ENCODE measurements at regions of chr5 and their contacts with region 1.

Region 1: DNA sequence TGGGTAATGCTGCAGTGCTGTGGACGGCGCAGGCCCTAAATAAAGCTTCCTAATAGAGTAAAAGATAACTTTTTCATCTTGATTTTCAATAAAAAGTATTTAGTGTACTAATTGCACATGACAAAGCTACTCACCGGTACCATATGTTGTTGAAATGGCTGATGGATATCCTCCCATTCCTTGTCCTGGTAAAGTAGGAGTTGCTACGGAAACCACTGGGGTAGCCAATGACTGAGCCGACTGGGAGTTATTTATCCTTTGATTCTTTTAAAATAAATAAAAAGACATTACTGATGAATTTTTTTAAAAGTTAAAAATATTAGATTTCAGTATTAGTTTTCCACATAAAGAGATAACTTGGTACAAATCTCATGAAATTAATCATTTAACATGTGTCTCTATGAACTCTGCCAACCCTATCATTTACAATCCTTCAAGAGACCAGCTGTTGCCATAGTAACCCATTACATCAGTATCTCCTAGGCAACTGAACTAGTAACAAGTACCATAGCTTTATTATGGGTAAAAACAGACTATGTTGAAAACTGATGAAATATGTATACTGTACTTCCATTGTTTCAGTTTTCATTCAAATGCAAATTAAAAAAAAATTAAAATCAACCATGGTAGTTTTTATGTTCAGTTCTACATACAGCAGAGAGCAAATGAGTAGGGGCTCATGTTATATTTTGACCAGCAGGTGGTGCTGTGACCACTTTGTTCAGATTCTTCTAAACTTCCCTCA is 153.7 kb downstream of the MEF2C start:
- DNase-seq: peak; percentile 88
- ATAC-seq: peak; percentile 67
- H3K4me3 ChIP-seq: no peak overlapping the region
- H3K27ac ChIP-seq: no peak overlapping the region
- H3K4me1 ChIP-seq: 0 out of 2 replicates have a peak, but pooled peaks cover 3% of the 10 kb centered on the region
- H3K27me3 ChIP-seq: no peaks in the 10 kb centered on the region
- CTCF ChIP-seq: peak; percentile 84

Region 2: GRCh38 chr5:87421307-87421706 is 1307.9 kb before region 1 on chr5:
- CTCF ChIA-PET with region 1: no interaction called
- POLR2A ChIA-PET with region 1: no interaction called
- intact Hi-C with region 1: loop called (anchors 10 kb)
- DNase-seq: no peak
- ATAC-seq: no peak
- H3K4me3 ChIP-seq: no peak overlapping the region
- H3K27ac ChIP-seq: no peak overlapping the region
- H3K4me1 ChIP-seq: peaks cover 16% of the 10 kb centered on the region
- H3K27me3 ChIP-seq: no peaks in the 10 kb centered on the region
- CTCF ChIP-seq: no peak

Region 3: GRCh38 chr5:88875341-88876234 is 146.3 kb after region 1 on chr5:
- CTCF ChIA-PET with region 1: interaction called, 9 read pairs
- POLR2A ChIA-PET with region 1: no interaction called
- intact Hi-C with region 1: loop called (anchors 1 kb)
- DNase-seq: peak; percentile 49
- ATAC-seq: peak; percentile 56
- H3K4me3 ChIP-seq: peak overlapping the region; percentile 25; the same call in 1 of the 2 replicates
- H3K27ac ChIP-seq: 0 out of 2 replicates have a peak overlapping the region, but pooled peaks have one; percentile 9
- H3K4me1 ChIP-seq: peaks cover 54% of the 10 kb centered on the region
- H3K27me3 ChIP-seq: no peaks in the 10 kb centered on the region
- CTCF ChIP-seq: no peak

Region 4: GRCh38 chr5:89036704-89037489 is 307.6 kb after region 1 on chr5:
- CTCF ChIA-PET with region 1: no interaction called
- POLR2A ChIA-PET with region 1: no interaction called
- intact Hi-C with region 1: loop called (anchors 5 kb)
- DNase-seq: peak; percentile 97
- ATAC-seq: peak; percentile 73
- H3K4me3 ChIP-seq: peak overlapping the region; percentile 22; the same call in 1 of the 2 replicates
- H3K27ac ChIP-seq: peak overlapping the region; percentile 97
- H3K4me1 ChIP-seq: peaks cover 48% of the 10 kb centered on the region
- H3K27me3 ChIP-seq: no peaks in the 10 kb centered on the region
- CTCF ChIP-seq: no peak

Region 5: GRCh38 chr5:89457411-89458331 is 728.4 kb after region 1 on chr5:
- CTCF ChIA-PET with region 1: no interaction called
- POLR2A ChIA-PET with region 1: no interaction called
- intact Hi-C with region 1: loop called (anchors 5 kb)
- DNase-seq: peak; percentile 90
- ATAC-seq: peak; percentile 98
- H3K4me3 ChIP-seq: no peak overlapping the region
- H3K27ac ChIP-seq: peak overlapping the region; percentile 89
- H3K4me1 ChIP-seq: peaks cover 19% of the 10 kb centered on the region
- H3K27me3 ChIP-seq: no peaks in the 10 kb centered on the region
- CTCF ChIP-seq: no peak

Region 6: GRCh38 chr5:90184764-90185163 is 1455.5 kb after region 1 on chr5:
- CTCF ChIA-PET with region 1: no interaction called
- POLR2A ChIA-PET with region 1: no interaction called
- intact Hi-C with region 1: loop called (anchors 10 kb)
- DNase-seq: no peak
- ATAC-seq: no peak
- H3K4me3 ChIP-seq: no peak overlapping the region
- H3K27ac ChIP-seq: no peak overlapping the region
- H3K4me1 ChIP-seq: peaks cover 15% of the 10 kb centered on the region
- H3K27me3 ChIP-seq: no peaks in the 10 kb centered on the region
- CTCF ChIP-seq: no peak

Region 7: DNA sequence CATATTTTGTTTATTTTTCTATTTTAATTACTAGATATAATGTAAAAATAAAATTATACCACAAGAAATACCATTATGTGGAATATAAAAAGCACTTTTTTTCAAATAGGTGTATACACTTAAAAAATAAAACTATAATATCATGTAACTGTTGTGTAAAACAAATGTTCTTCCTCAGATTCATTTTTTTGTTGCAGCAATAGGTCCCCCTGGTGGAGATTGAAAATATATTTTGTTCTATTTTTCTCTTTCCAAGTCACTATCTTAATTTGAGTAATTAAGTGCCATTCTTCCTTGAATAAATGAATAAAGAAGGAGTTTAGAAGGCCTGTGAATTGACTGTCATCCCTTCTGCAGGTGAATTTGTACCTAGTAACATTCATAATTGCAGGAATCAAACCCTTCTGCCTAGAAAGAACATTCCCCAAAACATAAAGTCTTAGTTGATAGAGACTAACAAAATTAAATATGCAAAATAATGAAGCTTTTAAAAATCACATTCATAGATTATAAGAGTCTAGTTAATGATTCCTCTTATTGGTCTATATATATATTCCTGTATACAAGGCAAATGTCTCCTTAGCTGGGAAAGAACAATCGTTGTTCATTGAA is 1656.9 kb after region 1 on chr5:
- CTCF ChIA-PET with region 1: no interaction called
- POLR2A ChIA-PET with region 1: no interaction called
- intact Hi-C with region 1: loop called (anchors 5 kb)
- DNase-seq: peak; percentile 70
- ATAC-seq: no peak; the same call in 1 of the 2 replicates
- H3K4me3 ChIP-seq: no peak overlapping the region
- H3K27ac ChIP-seq: no peak overlapping the region
- H3K4me1 ChIP-seq: peaks cover 9% of the 10 kb centered on the region
- H3K27me3 ChIP-seq: no peaks in the 10 kb centered on the region
- CTCF ChIP-seq: peak; percentile 72

Measured in PC-3 (cell line).